Cardiac septum (tissue), 1 donor: ENCODE measurements at regions of chr9 and their contacts with region 1.

Region 1: GRCh38 chr9:112379177-112380101 is 469 bp upstream of the HSDL2 start:
- DNase-seq: peak; percentile 100

Region 2: DNA sequence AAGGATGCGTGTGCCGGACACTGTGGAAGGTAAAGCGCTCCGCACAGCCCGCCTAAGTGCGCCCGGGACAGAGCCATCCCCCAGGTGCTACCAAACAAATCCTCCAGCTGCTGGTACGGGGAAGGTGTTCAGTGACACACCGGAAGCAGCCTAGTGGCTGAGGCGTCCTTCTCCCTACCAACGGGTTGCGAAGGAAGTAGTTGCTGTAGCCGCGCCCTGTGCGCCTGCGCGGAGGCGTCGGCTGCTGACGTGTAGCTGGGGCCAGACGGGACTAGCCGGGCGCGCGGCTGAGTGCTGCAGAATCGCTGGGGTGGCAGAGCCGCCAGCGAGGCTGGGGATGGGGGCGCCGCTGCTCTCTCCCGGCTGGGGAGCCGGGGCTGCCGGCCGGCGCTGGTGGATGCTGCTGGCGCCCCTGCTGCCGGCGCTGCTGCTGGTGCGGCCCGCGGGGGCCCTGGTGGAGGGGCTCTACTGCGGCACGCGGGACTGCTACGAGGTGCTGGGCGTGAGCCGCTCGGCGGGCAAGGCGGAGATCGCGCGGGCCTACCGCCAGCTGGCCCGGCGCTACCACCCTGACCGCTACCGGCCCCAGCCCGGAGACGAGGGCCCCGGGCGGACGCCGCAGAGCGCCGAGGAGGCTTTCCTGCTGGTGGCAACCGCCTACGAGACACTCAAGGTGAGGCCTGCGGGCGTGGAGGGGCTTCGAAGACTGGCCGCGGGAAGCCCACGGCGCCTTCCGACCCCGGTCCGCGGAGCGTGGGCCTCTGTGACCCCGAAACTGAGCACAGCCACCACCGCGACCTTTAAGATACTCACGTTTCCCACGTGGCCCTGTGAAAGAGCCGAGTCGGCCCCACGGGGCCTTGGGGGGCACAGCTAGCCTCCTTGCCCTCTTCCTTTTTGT is 748.1 kb before region 1 on chr9 and contains the start of gene DNAJC25:
- intact Hi-C with region 1: no loop called
- DNase-seq: peak; percentile 99
- total RNA-seq, gene DNAJC25: 5.0 TPM

Region 3: DNA sequence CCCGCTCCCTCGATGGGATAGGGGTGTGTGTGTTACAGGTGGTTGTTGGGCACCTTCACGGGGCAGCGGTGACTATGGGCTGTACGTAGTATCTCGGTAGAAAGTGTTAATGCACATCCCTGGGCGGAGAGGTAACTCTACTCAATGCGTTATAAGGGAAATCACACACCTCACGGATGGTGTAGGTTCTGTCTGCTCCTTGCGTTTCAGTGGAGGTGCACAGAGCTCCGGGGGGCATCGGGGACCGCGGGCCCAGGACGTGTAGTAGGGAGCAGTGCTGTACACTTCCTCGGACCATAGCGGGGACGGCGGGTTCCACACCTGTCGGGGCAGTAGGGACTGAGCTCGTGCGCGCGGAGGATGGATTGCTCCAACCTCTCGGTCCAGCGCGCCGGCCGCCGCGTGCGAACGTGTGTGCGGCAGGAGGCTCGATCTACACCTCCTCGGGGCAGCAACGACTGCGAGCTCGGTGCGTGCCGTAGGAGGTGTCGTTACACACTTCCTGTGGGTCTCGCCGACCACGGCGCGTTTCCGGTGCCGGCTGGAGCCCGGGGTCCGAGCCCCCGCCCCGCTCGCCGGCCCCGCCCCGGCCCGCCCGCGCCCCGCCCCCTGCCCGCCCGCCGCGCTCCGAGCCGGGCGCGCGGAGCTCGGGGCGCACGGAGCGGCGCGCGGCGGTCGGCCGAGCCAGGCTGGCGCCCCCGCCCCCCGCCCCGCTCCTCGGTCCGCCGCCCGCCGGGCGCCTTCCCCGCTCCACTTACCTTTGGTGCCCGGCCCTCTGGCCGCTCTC is 107.0 kb after region 1 on chr9 and contains the start of gene KIAA1958:
- intact Hi-C with region 1: loop called (anchors 10 kb)
- DNase-seq: peak; percentile 91
- total RNA-seq, gene KIAA1958: 5.3 TPM